Heart left ventricle (tissue), 16 donors: ENCODE measurements at regions of chr19 and their contacts with region 1.

Region 1: DNA sequence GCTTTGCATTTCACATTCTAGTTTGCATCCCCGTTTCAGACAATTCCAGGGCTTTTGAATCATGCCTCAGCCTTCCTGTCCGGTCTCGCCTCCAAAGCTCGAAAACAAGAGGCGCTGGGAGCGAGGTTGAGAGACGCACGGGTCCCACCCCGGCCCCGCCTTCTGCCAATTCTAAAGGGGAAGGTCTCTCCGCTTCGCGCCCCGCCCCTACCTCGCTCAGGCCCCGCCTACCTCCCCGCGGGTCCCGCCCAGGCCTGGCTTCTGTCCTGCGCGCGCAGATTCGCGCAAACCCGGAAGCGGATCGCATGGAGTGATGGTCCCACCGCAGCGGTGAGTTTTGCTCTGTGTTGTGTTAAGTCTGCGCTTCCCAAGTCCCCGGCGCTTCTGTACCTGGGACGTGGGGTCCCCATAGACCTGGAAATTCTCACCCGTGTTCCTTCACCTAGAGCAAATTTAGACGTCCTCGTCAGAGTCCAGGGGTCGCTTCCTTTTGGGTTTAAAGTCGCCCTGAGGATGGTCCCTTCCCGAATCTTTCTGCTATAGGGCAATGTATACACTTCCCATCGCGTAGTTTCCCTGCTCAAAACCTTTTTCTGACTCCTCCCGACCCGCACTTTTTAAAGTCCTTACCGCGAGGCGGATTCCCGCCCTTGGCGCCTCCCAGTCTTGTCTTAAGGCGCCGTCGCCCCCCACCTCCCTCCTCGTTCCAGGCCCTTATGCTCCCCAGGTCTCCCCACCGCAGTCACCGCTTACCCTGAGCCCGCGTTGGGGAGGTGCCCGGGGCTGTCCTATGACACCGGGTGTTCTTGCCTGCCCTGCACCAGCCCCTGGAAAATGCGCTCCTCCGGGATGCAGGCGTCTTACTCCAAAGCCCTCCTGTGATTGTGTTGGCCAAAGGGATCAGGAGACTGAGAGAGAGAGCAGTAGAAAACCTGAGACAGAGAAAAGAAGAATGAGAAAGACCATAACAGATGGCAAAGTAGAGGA is at the start of gene ZNF845:
- DNase-seq: peak; percentile 93 to 97 (median 96)
- ATAC-seq: peak; percentile 98 to 100 (median 100)
- H3K4me3 ChIP-seq: peak within 1 kb of the TSS; percentile 29 to 93 (median 76)
- H3K27ac ChIP-seq: peak within 1 kb of the TSS in 11 of 12 donors; percentile 60 to 81 (median 73)
- H3K4me1 ChIP-seq: peaks cover 0 to 19% (median 2%) of the 10 kb centered on the region in 12 donors
- H3K27me3 ChIP-seq: peaks cover 0 to 4% (median 0%) of the 10 kb centered on the region in 9 donors
- CTCF ChIP-seq: no peak
- POLR2A ChIP-seq: peak in 1 of 2 donors; percentile 74
- total RNA-seq, gene ZNF845: 2.7 to 5.7 (median 3.5) TPM

Region 2: GRCh38 chr19:52978576-52978975 is 355.2 kb before region 1 on chr19:
- intact Hi-C with region 1: loop called in 1 of 10 experiments (anchors 5 kb)
- DNase-seq: no peak
- ATAC-seq: no peak
- H3K4me3 ChIP-seq: no peak overlapping the region
- H3K27ac ChIP-seq: no peak overlapping the region
- H3K4me1 ChIP-seq: no peaks in the 10 kb centered on the region
- H3K27me3 ChIP-seq: no peaks in the 10 kb centered on the region
- CTCF ChIP-seq: no peak
- POLR2A ChIP-seq: no peak

Region 3: DNA sequence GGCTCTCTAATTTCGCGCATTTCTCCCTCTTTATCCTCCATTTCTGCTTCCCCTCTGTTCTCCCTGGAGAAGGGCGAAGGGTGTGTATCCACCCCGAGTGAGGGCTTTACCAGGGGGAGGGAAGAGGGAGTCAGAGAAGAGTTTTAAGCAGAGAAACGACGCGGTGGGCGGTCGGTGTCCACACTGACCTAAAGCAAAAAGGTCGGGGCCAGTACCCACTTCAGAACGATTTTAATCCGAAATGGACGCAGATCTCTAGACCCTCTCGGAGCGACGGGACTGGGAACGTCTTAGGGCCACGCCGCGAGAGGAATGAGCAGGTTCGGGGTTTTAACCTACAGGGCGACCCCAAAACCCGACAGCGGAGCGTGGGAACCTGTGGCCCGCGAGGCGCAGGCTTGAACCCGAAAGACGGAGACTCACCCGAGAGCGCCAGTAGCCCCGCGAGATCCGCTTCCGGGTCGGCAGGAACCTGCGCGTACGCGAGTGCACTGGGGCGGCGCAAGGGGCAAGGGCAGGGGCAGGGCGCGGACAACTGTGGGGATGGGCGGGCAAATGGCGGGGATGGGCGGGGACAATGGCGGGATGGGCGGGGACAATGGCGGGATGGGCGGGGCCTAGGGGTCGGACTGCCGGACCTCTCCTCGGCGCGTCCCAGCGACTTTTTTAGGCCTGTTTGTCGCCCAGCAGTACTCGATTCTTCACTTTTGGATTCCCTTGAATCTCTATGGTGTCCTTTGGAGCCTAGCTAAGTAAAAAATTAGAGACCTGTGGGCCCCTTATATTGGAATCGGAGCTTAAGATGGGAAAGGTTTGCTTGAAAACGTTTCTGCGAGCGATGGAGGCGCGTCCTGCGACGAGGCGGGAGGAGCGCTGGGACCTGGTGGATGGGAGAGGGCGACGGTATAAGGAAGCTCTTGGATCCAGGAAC is 79.1 kb before region 1 on chr19 and contains the start of gene ZNF677:
- intact Hi-C with region 1: loop called in 3 of 10 experiments (anchors 1 to 5 kb)
- DNase-seq: peak; percentile 94 to 98 (median 97)
- ATAC-seq: peak; percentile 100
- H3K4me3 ChIP-seq: peak within 1 kb of the TSS; percentile 60 to 96 (median 86)
- H3K27ac ChIP-seq: peak within 1 kb of the TSS; percentile 69 to 92 (median 82)
- H3K4me1 ChIP-seq: peaks cover 0 to 17% (median 6%) of the 10 kb centered on the region in 12 donors
- H3K27me3 ChIP-seq: no peaks in the 10 kb centered on the region
- CTCF ChIP-seq: peak in 1 of 12 donors; percentile 8
- POLR2A ChIP-seq: peak in 1 of 2 donors; percentile 67
- total RNA-seq, gene ZNF677: 10.3 to 27.8 (median 16.9) TPM

Region 4: GRCh38 chr19:53308339-53308811 is 25.4 kb before region 1 on chr19:
- intact Hi-C with region 1: no loop called
- DNase-seq: peak in 1 of 5 donors; percentile 26
- ATAC-seq: peak in 1 of 4 donors; percentile 15
- H3K4me3 ChIP-seq: peak overlapping the region in 1 of 12 donors; percentile 16
- H3K27ac ChIP-seq: no peak overlapping the region
- H3K4me1 ChIP-seq: peaks cover 0 to 5% (median 0%) of the 10 kb centered on the region in 12 donors
- H3K27me3 ChIP-seq: peaks cover 0 to 70% (median 24%) of the 10 kb centered on the region in 9 donors
- CTCF ChIP-seq: peak in 11 of 12 donors; percentile 10 to 64 (median 48)
- POLR2A ChIP-seq: no peak